PC-3 (cell line): ENCODE measurements at regions of chr2 and their contacts with region 1.

Region 1: DNA sequence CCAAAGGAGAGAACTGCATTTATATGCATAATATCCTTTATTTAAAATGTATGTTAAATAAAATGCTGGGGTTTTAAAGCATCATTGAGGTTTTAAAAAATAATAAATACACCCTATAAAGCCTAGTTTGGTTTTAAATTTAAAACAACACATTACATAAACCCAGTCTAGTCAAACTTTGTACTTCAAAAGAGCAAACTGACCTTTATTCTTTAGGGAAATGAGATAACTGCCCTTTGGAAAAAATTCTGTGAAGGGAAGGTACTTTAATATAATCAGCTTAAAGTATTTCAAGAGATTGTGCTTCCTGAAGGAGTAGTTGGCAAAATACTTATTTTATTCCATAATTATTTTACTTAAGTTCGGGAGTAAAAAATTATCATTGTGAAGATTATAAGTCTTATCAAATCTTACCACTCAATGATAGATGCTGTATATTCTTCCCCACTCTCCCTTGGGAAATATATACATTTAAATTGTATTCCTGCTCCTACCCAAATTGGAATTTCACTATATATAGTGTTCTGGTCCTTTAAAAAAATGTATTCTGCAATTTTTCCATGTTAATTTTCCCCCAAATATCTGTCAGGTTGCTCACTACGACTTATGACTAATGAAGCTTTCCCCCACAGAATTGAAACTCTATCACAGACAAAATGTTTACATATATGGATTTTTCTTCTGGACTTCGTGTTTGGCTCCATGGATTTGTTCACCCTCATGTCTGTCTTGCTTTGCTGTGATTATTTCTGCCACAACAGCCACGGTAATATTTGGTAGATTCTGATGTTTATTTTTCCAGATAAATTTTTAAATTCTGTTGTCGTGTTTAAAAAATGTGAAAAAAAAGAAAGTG is 42.1 kb downstream of the ZC3H6 start:
- DNase-seq: no peak
- ATAC-seq: no peak
- H3K4me3 ChIP-seq: no peak overlapping the region
- H3K27ac ChIP-seq: no peak overlapping the region
- H3K4me1 ChIP-seq: peaks cover 10% of the 10 kb centered on the region; the same call in 1 of the 2 replicates
- H3K27me3 ChIP-seq: no peaks in the 10 kb centered on the region
- CTCF ChIP-seq: no peak

Region 2: DNA sequence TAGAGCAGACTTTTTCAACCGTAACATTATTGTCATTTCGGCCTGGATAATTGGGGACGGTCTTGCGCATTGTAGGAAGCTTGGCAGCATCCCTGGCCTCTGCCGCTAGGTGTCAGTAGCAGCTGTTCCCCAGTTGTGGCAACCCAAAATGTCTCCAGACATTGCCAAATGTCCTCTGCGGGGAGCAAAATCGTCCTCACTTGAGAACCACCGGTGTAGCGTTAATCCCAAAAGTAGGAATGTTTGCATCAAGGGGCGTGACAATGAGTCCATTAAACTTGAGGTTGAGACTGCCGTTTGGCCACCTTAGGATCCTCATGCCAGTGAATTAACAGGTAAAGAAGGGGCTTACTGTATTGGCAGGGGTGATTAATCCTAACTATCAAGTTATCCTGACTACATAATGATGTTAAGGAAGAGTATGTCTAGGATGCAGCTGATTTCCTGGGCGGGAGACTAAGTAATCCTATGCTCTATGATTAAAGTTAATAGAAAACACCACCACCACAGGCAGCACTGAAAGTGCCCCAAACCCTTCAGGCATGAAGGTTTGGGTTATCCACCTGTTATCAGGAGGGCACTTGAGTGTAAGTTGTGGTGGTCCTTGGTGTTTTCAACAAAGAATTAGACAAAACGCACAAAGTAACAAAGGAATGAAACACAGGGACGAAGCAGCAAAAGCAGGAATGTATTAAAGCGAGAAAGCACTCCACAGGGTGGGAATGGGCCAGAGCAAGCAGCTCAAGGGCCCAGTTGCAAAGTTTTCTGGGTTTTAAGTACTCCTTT is 57.8 kb before region 1 on chr2:
- CTCF ChIA-PET with region 1: no interaction called
- POLR2A ChIA-PET with region 1: no interaction called
- intact Hi-C with region 1: no loop called
- DNase-seq: peak; percentile 87
- ATAC-seq: peak; percentile 59
- H3K4me3 ChIP-seq: peak overlapping the region; percentile 58
- H3K27ac ChIP-seq: no peak overlapping the region
- H3K4me1 ChIP-seq: peaks cover 4% of the 10 kb centered on the region
- H3K27me3 ChIP-seq: no peaks in the 10 kb centered on the region
- CTCF ChIP-seq: peak; percentile 98

Region 3: DNA sequence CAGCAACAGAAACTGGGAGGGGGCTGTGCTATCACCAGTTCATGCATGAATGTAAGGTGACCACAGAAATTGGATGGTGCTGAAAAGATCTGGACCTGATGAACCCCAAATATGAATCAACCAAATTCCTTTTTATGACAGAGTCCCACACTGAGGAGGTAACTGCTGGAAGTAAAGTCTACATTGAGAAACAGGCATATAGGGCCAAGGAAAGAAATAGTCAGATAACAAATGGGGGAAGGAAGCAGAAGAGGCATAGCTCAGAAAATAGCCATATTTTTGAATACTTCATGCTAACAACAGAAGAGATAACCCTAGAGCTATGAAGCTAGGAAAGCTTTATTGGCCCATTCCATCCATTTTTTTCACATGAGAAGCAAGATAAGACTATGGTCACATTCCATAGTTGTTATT is 16.4 kb before region 1 on chr2:
- CTCF ChIA-PET with region 1: no interaction called
- POLR2A ChIA-PET with region 1: no interaction called
- intact Hi-C with region 1: no loop called
- DNase-seq: no peak
- ATAC-seq: no peak
- H3K4me3 ChIP-seq: no peak overlapping the region
- H3K27ac ChIP-seq: no peak overlapping the region
- H3K4me1 ChIP-seq: no peaks in the 10 kb centered on the region
- H3K27me3 ChIP-seq: no peaks in the 10 kb centered on the region
- CTCF ChIP-seq: no peak

Region 4: GRCh38 chr2:112335600-112335999 is 18.1 kb after region 1 on chr2:
- CTCF ChIA-PET with region 1: no interaction called
- POLR2A ChIA-PET with region 1: no interaction called
- intact Hi-C with region 1: loop called (anchors 1 kb)
- DNase-seq: no peak
- ATAC-seq: no peak
- H3K4me3 ChIP-seq: no peak overlapping the region
- H3K27ac ChIP-seq: no peak overlapping the region
- H3K4me1 ChIP-seq: no peaks in the 10 kb centered on the region
- H3K27me3 ChIP-seq: no peaks in the 10 kb centered on the region
- CTCF ChIP-seq: no peak